ENCODE measurements at regions of chr20 and their contacts with region 1.

Region 1: GRCh38 chr20:51750037-51750763 is 18.0 kb downstream of the ATP9A start:
- DNase-seq: peak; percentile 97
- H3K4me3 Mint-ChIP-seq: peak overlapping the region; percentile 54
- H3K27ac Mint-ChIP-seq: peak overlapping the region; percentile 94
- H3K4me1 Mint-ChIP-seq: peaks cover 64% of the 10 kb centered on the region
- H3K27me3 Mint-ChIP-seq: no peaks in the 10 kb centered on the region
- CTCF ChIP-seq: no peak

Region 2: DNA sequence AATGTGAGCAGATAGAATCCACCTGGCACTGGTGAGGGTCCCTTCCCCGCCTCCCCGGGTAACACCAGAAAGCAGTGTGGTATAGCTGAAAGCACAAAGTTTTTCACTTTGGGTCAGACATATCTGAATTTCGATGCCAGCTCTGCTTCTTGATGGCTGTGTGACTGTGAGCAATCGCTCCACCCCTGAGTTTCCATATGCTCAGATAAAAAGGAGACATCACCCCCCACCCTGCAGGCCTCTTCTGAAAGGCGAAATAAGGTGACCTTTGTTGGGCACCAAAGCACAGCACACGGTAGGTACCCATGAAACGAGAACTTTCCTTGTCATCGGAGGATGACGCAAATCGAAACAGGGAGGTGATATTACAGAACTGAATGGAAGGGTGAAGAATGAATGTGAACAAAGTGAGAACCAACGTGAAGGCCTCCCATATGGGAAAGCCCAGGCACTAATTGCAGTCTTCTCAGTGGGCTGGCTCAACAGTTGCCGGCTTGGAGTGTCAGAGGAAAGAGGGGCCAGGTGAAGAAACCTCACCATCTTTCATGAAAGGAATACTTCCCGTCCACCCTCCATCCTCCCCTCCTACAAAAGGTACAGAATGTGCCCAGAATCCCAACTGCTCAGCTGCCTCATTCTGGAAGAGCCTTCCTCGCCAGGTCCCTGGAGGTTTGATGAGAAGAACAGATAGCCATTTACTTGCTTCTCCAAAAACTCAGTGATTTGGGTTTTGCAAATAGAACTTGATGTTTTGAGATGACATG is 269.5 kb before region 1 on chr20:
- CTCF ChIA-PET with region 1: no interaction called
- intact Hi-C with region 1: no loop called
- DNase-seq: no peak
- H3K4me3 Mint-ChIP-seq: no peak overlapping the region
- H3K27ac Mint-ChIP-seq: no peak overlapping the region
- H3K4me1 Mint-ChIP-seq: peaks cover 21% of the 10 kb centered on the region
- H3K27me3 Mint-ChIP-seq: no peaks in the 10 kb centered on the region
- CTCF ChIP-seq: no peak

Region 3: DNA sequence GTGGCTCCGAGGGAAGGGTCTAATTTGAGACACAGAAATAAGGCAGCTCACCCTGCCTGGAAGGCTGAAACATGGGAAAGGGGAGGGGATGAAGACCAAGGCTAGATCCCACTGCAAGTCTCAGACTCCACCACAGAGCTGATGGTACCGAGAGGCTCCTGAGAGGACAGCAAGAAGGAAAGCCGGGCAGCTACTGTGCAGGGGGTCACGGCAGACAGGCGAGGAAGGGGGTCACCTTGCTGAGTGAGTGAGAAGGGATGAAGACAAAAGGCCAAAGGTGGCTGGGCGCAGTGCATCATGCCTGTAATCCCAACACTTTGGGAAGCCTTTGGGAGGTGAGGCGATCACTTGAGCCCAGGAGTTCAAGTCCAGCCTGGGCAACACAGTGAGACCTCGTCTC is 82.7 kb before region 1 on chr20:
- CTCF ChIA-PET with region 1: interaction called, 11 read pairs
- intact Hi-C with region 1: no loop called
- DNase-seq: no peak
- H3K4me3 Mint-ChIP-seq: no peak overlapping the region
- H3K27ac Mint-ChIP-seq: no peak overlapping the region
- H3K4me1 Mint-ChIP-seq: no peaks in the 10 kb centered on the region
- H3K27me3 Mint-ChIP-seq: no peaks in the 10 kb centered on the region
- CTCF ChIP-seq: no peak

Region 4: DNA sequence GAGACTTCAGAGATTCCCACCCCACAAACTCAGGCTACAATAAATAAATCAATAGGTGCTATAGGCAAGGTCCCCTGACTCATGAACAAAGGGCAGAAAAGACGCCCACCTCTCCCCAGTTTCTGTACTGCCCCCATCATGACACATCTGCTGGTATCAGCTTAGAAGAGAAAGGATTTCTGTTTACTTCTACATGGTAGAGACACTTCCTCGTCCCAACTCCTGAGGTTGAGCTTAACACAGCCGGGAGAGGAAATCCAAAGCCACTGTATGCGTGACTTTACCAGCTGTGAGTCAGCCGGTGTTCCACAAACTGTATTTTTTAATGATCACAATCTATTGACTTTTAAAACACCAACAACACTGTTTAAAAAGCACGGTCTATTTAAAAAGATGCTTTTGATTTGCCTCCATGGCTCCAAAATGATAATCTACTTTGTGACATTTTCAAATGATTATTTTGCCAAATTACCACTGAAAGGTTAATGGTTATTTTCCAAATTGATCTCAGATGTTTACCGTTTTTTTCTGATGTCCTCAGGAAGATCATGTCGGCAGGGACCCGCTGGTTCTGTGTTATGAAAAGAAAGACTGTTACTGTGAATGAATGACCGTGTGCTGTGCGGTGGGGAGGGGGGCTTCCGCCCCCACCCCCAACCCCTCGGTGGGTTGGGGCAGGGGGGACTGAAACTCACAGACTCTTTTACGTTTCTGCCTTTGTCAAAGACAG is 54.5 kb before region 1 on chr20:
- CTCF ChIA-PET with region 1: interaction called, 10 read pairs
- intact Hi-C with region 1: no loop called
- DNase-seq: peak; percentile 69
- H3K4me3 Mint-ChIP-seq: peak overlapping the region; percentile 5
- H3K27ac Mint-ChIP-seq: peak overlapping the region; percentile 81
- H3K4me1 Mint-ChIP-seq: peaks cover 47% of the 10 kb centered on the region
- H3K27me3 Mint-ChIP-seq: no peaks in the 10 kb centered on the region
- CTCF ChIP-seq: no peak

Region 5: DNA sequence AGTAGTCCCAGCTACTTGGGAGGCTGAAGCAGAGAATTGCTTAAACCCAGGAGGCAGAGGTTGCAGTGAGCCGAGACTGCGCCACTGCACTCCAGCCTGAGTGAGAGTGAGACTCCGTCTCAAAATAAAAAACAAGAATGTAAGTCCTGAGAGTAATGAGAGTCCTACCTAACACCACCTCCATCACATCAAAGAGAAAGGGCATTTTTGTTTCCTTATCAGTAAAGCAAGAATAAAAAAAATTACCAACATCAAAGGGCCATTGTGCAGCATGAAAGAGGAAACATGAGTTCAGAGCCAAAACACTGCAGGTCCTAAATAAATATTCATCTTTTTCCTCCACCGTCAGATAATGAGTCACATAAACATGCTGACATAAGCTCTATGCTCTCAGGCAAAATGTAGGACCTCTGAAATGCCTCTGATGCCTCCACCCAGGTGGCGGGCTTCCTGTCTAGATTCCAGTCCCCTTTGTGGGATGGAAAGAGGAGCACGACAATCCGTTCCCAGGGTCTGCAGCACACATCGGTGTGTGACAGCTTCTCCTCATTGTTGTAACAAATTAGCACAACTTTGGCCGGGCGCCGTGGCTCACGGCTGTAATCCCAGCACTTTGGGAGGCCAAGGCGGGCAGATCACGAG is 10.8 kb after region 1 on chr20:
- CTCF ChIA-PET with region 1: interaction called, 7 read pairs
- intact Hi-C with region 1: loop called (anchors 1 kb)
- DNase-seq: peak; percentile 75
- H3K4me3 Mint-ChIP-seq: peak overlapping the region; percentile 57
- H3K27ac Mint-ChIP-seq: peak overlapping the region; percentile 79
- H3K4me1 Mint-ChIP-seq: peaks cover 75% of the 10 kb centered on the region
- H3K27me3 Mint-ChIP-seq: no peaks in the 10 kb centered on the region
- CTCF ChIP-seq: no peak

Region 6: DNA sequence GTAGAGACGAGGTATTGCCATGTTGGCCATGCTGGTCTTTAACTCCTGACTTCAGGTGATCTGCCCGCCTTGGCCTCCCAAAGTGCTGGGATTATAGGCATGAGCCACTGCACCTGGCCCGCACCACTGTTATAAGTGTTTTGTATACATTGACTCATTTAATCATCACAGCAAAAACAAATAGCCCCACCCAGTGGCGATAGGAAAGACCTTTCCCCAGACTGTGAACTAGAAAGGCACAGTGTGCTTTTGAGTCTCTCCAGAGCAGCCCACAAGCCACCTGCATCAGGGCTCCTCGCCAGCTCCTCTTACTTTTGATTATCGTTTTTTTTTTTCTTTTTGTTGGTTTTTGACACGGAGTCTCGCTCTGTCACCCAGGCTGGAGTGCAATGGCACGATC is 469.2 kb after region 1 on chr20:
- CTCF ChIA-PET with region 1: no interaction called
- intact Hi-C with region 1: no loop called
- DNase-seq: peak; percentile 12
- H3K4me3 Mint-ChIP-seq: no peak overlapping the region
- H3K27ac Mint-ChIP-seq: no peak overlapping the region
- H3K4me1 Mint-ChIP-seq: no peaks in the 10 kb centered on the region
- H3K27me3 Mint-ChIP-seq: peaks cover 13% of the 10 kb centered on the region
- CTCF ChIP-seq: no peak